ENCODE measurements at regions of chr1 and their contacts with region 1.

Region 1: GRCh38 chr1:161071886-161072371 is 2.2 kb upstream of the ARHGAP30 start:
- DNase-seq: peak; percentile 29 to 76 (median 44)
- ATAC-seq: no peak
- H3K4me3 Mint-ChIP-seq: peak overlapping the region in 4 of 10 donors; percentile 18 to 47 (median 24)
- H3K27ac Mint-ChIP-seq: peak overlapping the region; percentile 68 to 98 (median 88)
- H3K4me1 Mint-ChIP-seq: peaks cover 29 to 57% (median 46%) of the 10 kb centered on the region in 4 donors
- H3K27me3 Mint-ChIP-seq: no peaks in the 10 kb centered on the region

Region 2: GRCh38 chr1:160711602-160712311 is 360.2 kb before region 1 on chr1 and contains the start of gene CD48:
- POLR2A ChIA-PET with region 1: no interaction called
- DNase-seq: peak; percentile 26 to 88 (median 64)
- ATAC-seq: peak; percentile 60 to 67
- H3K4me3 Mint-ChIP-seq: no peak within 1 kb of the TSS
- H3K27ac Mint-ChIP-seq: peak within 1 kb of the TSS in 2 of 10 donors; percentile 87 to 95
- H3K4me1 Mint-ChIP-seq: peaks cover 11 to 49% (median 38%) of the 10 kb centered on the region in 4 donors
- H3K27me3 Mint-ChIP-seq: no peaks in the 10 kb centered on the region
- polyA plus RNA-seq, gene CD48: 186 to 213 (median 200) TPM

Region 3: DNA sequence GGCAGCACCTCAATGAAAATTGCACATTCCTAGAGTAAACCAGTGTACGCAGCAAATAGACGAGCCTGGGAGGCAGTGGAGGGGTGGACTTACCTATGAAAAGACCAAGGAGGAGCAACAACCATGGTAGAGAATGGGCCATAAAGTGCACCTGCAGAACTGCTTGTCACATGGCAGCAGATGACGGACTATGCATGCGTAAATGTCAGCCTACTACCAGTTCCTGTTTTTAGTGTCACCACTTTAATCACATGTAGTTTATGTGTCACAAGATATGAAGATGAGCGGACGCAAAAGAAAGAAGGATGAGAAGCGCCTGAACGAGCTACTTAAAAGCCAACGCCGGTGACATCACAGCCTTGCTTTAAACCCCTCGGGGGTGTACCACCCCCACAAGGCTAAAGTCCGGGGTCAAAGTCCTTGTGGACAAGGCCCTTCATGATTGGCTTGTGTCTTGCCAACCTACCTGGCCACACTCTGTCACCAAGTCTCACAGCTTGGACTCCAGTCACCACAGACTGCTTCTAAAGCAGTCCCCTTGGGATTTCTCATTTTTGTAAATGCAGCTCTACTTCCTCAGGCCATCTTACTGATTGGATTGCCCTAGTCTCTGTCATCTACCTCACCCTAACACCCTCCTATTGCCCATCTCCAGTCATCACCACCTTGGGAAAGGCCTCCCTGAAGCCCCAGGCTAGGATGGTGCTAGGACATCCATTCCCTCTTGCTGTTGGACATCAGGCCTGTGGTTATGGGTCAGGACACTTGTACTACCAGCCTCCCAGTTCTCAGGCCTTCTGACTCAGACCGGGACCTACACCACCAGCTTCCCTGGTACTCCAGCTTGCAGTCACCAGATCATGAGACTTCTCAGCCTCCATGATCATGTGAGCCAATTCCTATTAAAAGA is 282.0 kb before region 1 on chr1:
- POLR2A ChIA-PET with region 1: no interaction called
- DNase-seq: peak in 2 of 10 donors; percentile 47 to 67
- ATAC-seq: peak in 1 of 2 donors; percentile 66
- H3K4me3 Mint-ChIP-seq: peak overlapping the region in 1 of 10 donors; percentile 53
- H3K27ac Mint-ChIP-seq: peak overlapping the region in 5 of 10 donors; percentile 5 to 93 (median 48)
- H3K4me1 Mint-ChIP-seq: peaks cover 2 to 29% (median 14%) of the 10 kb centered on the region in 4 donors
- H3K27me3 Mint-ChIP-seq: no peaks in the 10 kb centered on the region

Region 4: GRCh38 chr1:161013488-161014230 is 58.3 kb before region 1 on chr1:
- POLR2A ChIA-PET with region 1: interaction called, 28 read pairs
- DNase-seq: peak; percentile 30 to 77 (median 58)
- ATAC-seq: peak; percentile 89 to 91
- H3K4me3 Mint-ChIP-seq: peak overlapping the region; percentile 73 to 89 (median 83)
- H3K27ac Mint-ChIP-seq: peak overlapping the region; percentile 86 to 99 (median 95)
- H3K4me1 Mint-ChIP-seq: peaks cover 15 to 41% (median 33%) of the 10 kb centered on the region in 4 donors
- H3K27me3 Mint-ChIP-seq: no peaks in the 10 kb centered on the region

Region 5: DNA sequence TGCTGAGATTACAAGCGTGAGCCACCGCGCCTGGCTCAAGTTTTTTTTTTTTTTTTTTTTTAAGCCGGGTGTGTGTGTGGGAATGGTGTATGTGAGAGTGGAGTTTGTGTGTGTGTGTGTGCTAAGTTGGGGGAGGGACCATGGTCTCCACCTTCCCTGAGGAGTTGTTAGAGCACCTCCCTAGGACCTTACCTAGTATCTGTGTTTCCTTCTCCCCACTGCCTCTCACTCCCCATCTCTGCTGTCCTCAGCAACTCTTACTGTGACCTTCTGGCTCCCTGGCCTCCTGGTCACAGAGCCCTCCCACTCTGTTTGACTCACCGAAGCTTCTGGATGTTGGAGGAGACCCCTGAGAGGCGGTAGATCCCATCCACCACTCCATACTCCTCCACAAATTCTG is 12.6 kb before region 1 on chr1:
- POLR2A ChIA-PET with region 1: interaction called, 36 read pairs
- DNase-seq: no peak
- ATAC-seq: no peak
- H3K4me3 Mint-ChIP-seq: peak overlapping the region in 6 of 10 donors; percentile 12 to 72 (median 48)
- H3K27ac Mint-ChIP-seq: peak overlapping the region; percentile 68 to 96 (median 84)
- H3K4me1 Mint-ChIP-seq: peaks cover 34 to 78% (median 68%) of the 10 kb centered on the region in 4 donors
- H3K27me3 Mint-ChIP-seq: no peaks in the 10 kb centered on the region

Region 6: DNA sequence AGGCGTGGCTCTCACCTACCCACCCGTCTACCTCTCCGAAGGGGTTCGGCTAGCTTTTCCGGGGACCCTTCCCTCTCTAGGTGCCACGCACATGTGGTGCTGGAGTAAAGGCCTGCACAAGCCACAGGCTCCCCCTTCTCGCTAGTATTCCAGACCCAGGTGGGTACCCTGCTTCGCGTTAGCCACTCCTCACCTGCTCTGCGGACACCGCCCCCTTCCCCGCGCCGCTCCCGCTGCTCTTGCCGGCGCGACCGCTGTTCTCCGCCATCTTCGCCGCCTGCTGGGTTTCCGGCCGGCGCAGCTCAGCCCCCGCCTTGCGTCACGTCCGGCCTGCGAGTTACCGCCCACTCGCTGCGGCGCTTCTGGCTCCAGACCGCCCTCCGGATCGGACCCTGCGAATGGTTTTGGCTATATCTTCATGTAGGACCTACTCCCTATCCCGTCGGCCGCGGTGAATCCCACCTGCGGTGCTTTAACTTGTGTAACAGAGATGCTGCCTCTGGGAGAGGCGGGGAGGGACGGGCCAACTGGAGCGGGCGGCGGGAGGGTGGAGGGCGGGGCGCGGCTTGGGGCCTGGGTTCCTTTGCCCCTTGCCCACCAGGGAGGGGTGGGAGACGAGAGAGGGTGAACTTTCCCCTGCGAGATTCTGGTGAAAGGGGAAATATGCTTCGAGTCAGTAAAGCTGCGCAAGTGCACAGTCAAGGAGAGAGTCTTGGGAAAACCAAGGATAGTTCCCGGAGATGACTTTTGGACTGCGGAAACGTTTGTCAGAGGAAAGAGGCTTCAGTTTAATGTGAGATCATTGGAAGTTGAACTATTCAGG is 46.0 kb after region 1 on chr1 and contains the starts of genes NIT1 and PFDN2:
- POLR2A ChIA-PET with region 1: interaction called, 16 read pairs
- DNase-seq: peak; percentile 76 to 88 (median 83)
- ATAC-seq: peak; percentile 82 to 86
- H3K4me3 Mint-ChIP-seq: peak within 1 kb of the TSS; percentile 91 to 97 (median 95)
- H3K27ac Mint-ChIP-seq: peak within 1 kb of the TSS; percentile 77 to 98 (median 95)
- H3K4me1 Mint-ChIP-seq: peaks cover 36 to 90% (median 68%) of the 10 kb centered on the region in 4 donors
- H3K27me3 Mint-ChIP-seq: no peaks in the 10 kb centered on the region
- polyA plus RNA-seq, gene NIT1: 16.8 to 25.0 (median 18.3) TPM
- polyA plus RNA-seq, gene PFDN2: 74.6 to 91.3 (median 86.0) TPM

Region 7: DNA sequence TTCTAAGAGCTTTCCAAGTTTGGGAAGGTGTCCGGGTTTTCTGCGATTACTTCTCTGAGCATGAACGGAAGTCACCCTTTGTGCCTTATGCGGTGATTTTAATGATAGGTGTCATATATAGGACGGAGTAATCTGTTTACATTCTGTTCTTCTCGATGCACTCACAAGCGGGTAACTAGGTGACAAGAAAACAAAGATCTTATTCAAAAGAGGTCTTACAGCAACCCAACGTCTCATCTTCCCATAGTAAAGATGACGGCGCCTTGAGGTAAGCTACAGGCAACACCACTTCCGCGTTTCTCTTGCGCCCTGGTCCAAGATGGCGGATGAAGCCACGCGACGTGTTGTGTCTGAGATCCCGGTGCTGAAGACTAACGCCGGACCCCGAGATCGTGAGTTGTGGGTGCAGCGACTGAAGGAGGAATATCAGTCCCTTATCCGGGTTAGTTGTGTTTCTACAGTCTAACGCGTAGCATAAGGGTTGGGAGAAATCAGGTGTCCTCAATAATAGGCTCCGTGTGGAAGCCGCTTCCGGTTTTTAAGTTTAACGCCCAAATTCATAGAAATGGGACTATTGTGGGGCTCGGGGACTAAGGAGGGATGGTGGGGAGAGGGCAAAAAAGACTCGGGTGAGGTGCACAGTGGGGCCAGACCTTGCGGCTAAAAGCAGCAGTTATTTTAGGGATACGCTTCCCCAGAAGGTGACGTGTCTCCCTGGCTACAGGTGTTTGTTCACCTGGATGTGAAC is 81.9 kb after region 1 on chr1 and contains the start of gene UFC1:
- POLR2A ChIA-PET with region 1: interaction called, 15 read pairs
- DNase-seq: peak; percentile 65 to 93 (median 84)
- ATAC-seq: peak; percentile 91 to 94
- H3K4me3 Mint-ChIP-seq: peak within 1 kb of the TSS; percentile 91 to 100 (median 98)
- H3K27ac Mint-ChIP-seq: peak within 1 kb of the TSS; percentile 99 to 100 (median 100)
- H3K4me1 Mint-ChIP-seq: peaks cover 15 to 39% (median 31%) of the 10 kb centered on the region in 4 donors
- H3K27me3 Mint-ChIP-seq: peaks cover 0 to 1% (median 0%) of the 10 kb centered on the region in 5 donors
- polyA plus RNA-seq, gene UFC1: 148 to 158 (median 155) TPM

Region 8: DNA sequence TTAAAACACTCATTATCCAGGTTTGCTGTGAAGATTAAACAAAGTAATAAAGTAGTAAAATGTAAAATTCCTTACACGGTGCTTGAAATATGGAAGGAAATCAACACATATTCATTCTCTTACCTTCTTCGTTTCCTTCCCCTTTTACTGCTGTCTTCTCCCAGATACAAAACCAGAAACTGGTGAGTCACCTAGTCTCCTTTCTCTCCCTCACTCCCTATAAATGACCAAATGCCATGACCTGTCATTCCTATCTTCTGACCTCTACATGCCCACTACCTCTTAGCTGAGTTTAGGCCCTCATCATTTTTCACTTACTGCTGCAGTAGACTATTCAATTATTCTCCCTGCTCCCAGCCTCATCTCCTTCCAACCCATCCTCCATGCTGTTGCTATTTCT is 170.4 kb after region 1 on chr1:
- POLR2A ChIA-PET with region 1: no interaction called
- DNase-seq: no peak
- ATAC-seq: no peak
- H3K4me3 Mint-ChIP-seq: no peak overlapping the region
- H3K27ac Mint-ChIP-seq: no peak overlapping the region
- H3K4me1 Mint-ChIP-seq: no peaks in the 10 kb centered on the region
- H3K27me3 Mint-ChIP-seq: peaks cover 3 to 15% (median 10%) of the 10 kb centered on the region in 5 donors